ENCODE measurements at regions of chr6 and their contacts with region 1.

Region 1: GRCh38 chr6:149028767-149029405 is 282.1 kb downstream of the UST start:
- DNase-seq: no peak
- H3K4me3 ChIP-seq: no peak overlapping the region
- H3K27ac ChIP-seq: no peak overlapping the region
- H3K4me1 ChIP-seq: 0 out of 7 replicates have a peak, but pooled peaks cover 0 to 2% (median 0%) of the 10 kb centered on the region in 4 experiments
- H3K27me3 ChIP-seq: no peaks in the 10 kb centered on the region
- CTCF ChIP-seq: peak in 2 of 3 experiments; percentile 47 to 63; a peak in 2 of 4 replicates
- EP300 ChIP-seq: no peak
- POLR2A ChIP-seq: no peak
- RAD21 ChIP-seq: peak; percentile 77 to 80

Region 2: DNA sequence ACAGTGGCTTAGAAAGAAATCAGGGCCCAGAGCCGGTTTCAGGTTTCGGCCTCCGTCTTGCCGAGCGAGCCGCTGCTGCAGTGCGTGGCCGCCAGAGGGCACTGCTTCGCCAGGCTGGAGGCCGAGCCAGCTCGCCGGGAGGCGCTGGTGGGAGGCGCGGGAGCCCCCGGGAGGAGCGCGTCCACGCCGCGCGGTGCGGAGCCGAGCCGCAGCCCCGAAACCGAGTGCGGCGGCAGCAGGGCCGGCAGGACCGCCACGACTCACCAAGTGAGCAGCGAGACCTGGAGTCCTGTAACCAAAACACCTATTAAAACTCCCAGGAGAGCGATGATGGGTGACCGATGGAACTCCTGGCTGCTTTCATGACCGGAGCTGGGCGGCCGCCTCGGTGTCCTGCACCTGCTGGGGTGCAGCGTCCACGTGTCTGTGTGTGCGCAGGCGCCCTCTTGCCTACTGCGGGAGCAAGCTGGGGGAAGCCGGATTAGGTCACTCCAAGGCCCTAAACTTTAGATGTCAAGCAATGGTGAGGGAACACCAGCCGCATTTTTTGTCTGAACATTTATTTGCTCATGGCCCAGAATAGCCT is 468.9 kb before region 1 on chr6:
- CTCF ChIA-PET with region 1: interaction called, 12 read pairs
- POLR2A ChIA-PET with region 1: no interaction called
- DNase-seq: peak; percentile 21 to 94
- H3K4me3 ChIP-seq: peak overlapping the region; percentile 18 to 60 (median 43); a peak in 7 of 8 replicates
- H3K27ac ChIP-seq: no peak overlapping the region
- H3K4me1 ChIP-seq: no peaks in the 10 kb centered on the region
- H3K27me3 ChIP-seq: peaks cover 0 to 10% (median 6%) of the 10 kb centered on the region in 4 experiments; a peak in 5 of 7 replicates
- CTCF ChIP-seq: peak; percentile 90 to 97 (median 97)
- EP300 ChIP-seq: 0 out of 3 replicates have a peak, but pooled peaks of 1 of the 2 experiments have one; percentile 58
- POLR2A ChIP-seq: 0 out of 3 replicates have a peak, but pooled peaks of 1 of the 2 experiments have one; percentile 44
- RAD21 ChIP-seq: peak; percentile 95 to 97

Region 3: GRCh38 chr6:148578245-148578732 is 450.6 kb before region 1 on chr6:
- CTCF ChIA-PET with region 1: interaction called, 49 read pairs
- POLR2A ChIA-PET with region 1: no interaction called
- DNase-seq: peak; percentile 74 to 86
- H3K4me3 ChIP-seq: no peak overlapping the region
- H3K27ac ChIP-seq: no peak overlapping the region
- H3K4me1 ChIP-seq: peaks cover 0 to 6% (median 1%) of the 10 kb centered on the region in 4 experiments; a peak in 5 of 7 replicates
- H3K27me3 ChIP-seq: no peaks in the 10 kb centered on the region
- CTCF ChIP-seq: peak; percentile 92 to 100 (median 98)
- EP300 ChIP-seq: no peak
- POLR2A ChIP-seq: no peak
- RAD21 ChIP-seq: peak; percentile 100

Region 4: DNA sequence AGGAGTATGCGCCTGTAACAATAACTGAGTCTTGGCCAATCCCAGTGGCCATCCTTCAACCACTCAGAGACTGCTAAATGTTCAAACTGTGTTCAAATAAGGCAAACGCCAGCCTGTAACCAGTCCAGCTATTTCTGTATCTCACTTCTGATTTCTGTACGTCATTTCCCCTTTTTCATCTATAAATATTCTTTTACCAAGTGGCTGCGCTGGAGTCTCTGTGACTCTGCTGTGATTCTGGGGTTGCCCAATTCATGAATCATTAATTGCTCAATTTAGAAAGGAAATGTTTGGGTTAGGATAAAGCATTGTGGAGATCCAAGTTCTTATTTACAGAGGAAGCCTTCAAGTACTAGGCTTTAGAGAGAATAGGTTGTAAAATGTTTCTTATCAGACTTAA is 371.8 kb before region 1 on chr6:
- CTCF ChIA-PET with region 1: no interaction called
- POLR2A ChIA-PET with region 1: no interaction called
- DNase-seq: no peak
- H3K4me3 ChIP-seq: no peak overlapping the region
- H3K27ac ChIP-seq: no peak overlapping the region
- H3K4me1 ChIP-seq: no peaks in the 10 kb centered on the region
- H3K27me3 ChIP-seq: no peaks in the 10 kb centered on the region
- CTCF ChIP-seq: no peak
- EP300 ChIP-seq: no peak
- POLR2A ChIP-seq: no peak
- RAD21 ChIP-seq: no peak

Region 5: GRCh38 chr6:148947621-148948444 is 81.1 kb before region 1 on chr6:
- CTCF ChIA-PET with region 1: interaction called, 13 read pairs
- POLR2A ChIA-PET with region 1: no interaction called
- DNase-seq: peak; percentile 80 to 94
- H3K4me3 ChIP-seq: no peak overlapping the region
- H3K27ac ChIP-seq: no peak overlapping the region
- H3K4me1 ChIP-seq: peaks cover 0 to 12% (median 5%) of the 10 kb centered on the region in 4 experiments; a peak in 4 of 7 replicates
- H3K27me3 ChIP-seq: no peaks in the 10 kb centered on the region
- CTCF ChIP-seq: peak; percentile 74 to 91 (median 81)
- EP300 ChIP-seq: no peak
- POLR2A ChIP-seq: no peak
- RAD21 ChIP-seq: peak; percentile 79 to 86

Region 6: DNA sequence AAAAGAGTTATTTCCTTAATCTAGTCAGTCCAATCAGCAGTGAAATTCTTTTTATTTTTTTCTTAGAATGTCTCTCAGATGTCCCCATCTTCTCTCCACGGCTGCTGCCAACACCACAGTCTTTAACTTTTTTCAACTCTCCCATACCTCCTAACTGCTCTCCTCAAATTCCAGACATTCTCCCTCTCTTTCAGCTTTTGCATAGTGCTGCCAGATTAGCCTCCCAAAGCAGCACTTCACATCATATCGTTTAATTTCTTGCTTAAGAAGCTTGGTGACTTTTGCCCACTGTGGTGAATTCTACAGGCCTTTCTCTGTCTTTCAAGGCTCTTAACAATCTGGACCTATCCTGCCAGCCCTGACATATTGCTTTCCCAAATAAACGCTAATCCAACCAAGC is 48.7 kb before region 1 on chr6:
- CTCF ChIA-PET with region 1: interaction called, 10 read pairs
- POLR2A ChIA-PET with region 1: no interaction called
- DNase-seq: no peak
- H3K4me3 ChIP-seq: no peak overlapping the region
- H3K27ac ChIP-seq: no peak overlapping the region
- H3K4me1 ChIP-seq: peaks cover 2 to 5% (median 2%) of the 10 kb centered on the region in 4 experiments; a peak in 3 of 7 replicates
- H3K27me3 ChIP-seq: no peaks in the 10 kb centered on the region
- CTCF ChIP-seq: no peak
- EP300 ChIP-seq: no peak
- POLR2A ChIP-seq: no peak
- RAD21 ChIP-seq: no peak

Region 7: DNA sequence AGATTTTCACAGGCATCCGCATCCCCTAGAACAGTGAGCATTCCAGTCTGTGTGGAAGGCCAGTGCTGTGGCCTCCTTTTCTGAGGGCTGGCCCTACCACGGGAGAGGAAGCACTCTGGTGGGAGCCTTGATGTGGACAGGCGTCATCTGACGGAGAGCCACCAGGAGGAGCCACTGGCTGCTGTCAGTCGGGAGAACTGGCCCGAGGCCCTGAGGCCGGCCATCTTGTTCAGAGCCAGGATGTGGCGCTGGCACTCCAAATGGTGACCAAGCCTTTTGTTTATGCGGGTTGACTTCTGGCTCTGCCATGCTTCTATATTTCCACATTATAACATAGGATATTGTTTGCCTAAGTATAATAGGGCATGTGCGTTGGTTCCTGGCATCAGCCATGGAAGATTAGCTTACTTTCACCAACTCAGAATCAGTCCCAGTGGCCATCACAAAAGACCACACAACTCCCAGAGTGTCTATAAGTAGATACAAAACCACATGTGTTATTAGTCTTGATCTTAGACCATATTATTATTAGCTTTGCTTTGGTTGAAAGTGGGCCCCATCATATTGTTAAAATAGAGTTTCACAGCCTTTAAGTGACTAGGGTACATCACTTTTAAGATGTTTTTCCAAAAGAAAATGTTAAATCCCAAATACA is 14.7 kb after region 1 on chr6:
- CTCF ChIA-PET with region 1: interaction called, 44 read pairs
- POLR2A ChIA-PET with region 1: interaction called, 4 read pairs
- DNase-seq: peak; percentile 27 to 78
- H3K4me3 ChIP-seq: no peak overlapping the region
- H3K27ac ChIP-seq: no peak overlapping the region
- H3K4me1 ChIP-seq: peaks cover 0 to 12% (median 7%) of the 10 kb centered on the region in 4 experiments; a peak in 6 of 7 replicates
- H3K27me3 ChIP-seq: no peaks in the 10 kb centered on the region
- CTCF ChIP-seq: peak; percentile 65 to 76 (median 69)
- EP300 ChIP-seq: no peak
- POLR2A ChIP-seq: no peak
- RAD21 ChIP-seq: peak; percentile 63 to 75

Region 8: DNA sequence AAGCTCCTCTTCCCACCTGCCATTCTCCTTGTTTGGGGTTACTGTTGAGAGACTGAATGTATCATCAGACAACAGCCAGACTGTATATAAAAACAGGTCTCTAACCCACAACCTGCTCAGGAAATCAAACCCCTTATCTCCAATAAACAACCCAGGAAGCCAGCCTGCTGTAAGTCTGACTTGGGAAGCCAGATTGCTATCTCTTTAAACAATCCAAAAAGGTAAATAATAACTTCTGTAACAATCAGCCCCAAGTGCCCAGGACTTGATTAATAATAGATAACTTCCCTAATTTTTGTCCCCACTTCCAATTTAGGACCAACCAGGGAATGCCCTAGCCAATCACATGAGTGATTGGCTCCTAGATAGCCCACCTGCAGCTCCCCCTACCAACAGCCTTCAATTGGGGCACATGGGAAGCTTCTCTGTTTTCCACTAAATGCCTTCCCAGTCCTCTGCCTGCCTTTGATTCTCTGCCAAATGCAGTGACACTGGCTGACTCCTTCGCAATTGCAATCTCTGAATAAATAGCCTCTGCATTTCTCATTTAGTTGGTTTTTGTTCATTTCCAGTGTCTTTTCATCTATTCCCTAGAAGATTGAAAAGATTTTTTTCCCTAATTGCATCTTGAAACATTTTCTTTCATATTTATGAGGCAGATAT is 171.5 kb after region 1 on chr6:
- CTCF ChIA-PET with region 1: no interaction called
- POLR2A ChIA-PET with region 1: no interaction called
- DNase-seq: no peak
- H3K4me3 ChIP-seq: no peak overlapping the region
- H3K27ac ChIP-seq: no peak overlapping the region
- H3K4me1 ChIP-seq: peaks cover 0 to 2% (median 0%) of the 10 kb centered on the region in 4 experiments; a peak in 2 of 7 replicates
- H3K27me3 ChIP-seq: no peaks in the 10 kb centered on the region
- CTCF ChIP-seq: no peak
- EP300 ChIP-seq: no peak
- POLR2A ChIP-seq: no peak
- RAD21 ChIP-seq: no peak

Region 9: DNA sequence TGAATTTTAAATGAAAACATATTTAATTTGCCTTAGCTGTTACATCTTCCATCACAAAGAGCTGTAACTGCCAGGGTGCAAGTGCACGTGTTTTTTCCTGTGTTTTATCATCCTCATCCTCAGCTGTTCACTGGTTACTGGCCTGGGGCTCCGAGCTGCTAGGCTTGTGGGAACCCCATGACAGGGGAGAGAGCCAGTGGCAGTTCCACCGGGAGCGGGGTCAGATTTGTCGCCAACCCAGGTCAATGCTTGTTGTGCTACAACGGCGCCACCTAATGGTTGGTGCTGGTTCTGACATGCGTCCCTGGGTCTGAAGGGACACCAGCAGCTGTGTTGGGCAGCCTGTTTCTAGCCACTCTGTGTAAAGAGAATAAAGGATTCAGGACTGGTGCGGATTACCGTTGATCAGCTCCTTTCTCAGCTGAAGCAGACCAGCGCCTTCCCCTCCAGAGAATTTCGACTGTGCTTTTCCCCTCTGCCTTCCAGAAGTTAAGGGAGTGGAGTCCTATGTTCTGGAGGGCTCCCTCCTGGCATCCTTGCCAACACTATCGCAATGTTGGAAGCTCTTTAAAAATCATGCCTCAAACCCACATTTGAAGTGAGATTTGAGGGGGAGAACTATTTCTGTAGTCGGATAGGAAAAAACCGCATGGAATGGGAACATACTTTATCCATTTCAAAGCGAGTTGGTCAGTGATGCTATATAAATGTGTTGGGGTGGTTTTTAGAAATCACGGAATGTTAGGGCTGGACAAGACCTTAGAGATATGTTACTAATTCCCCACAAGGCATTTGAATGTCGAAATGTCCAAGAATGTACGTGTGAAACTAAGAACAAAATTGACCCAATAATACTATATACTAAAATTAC is 403.3 kb after region 1 on chr6:
- CTCF ChIA-PET with region 1: interaction called, 16 read pairs
- POLR2A ChIA-PET with region 1: no interaction called
- DNase-seq: peak; percentile 92 to 99
- H3K4me3 ChIP-seq: no peak overlapping the region
- H3K27ac ChIP-seq: no peak overlapping the region
- H3K4me1 ChIP-seq: 0 out of 7 replicates have a peak, but pooled peaks cover 0 to 2% (median 0%) of the 10 kb centered on the region in 4 experiments
- H3K27me3 ChIP-seq: no peaks in the 10 kb centered on the region
- CTCF ChIP-seq: peak; percentile 94 to 98 (median 95)
- EP300 ChIP-seq: no peak
- POLR2A ChIP-seq: no peak
- RAD21 ChIP-seq: peak; percentile 99 to 100

Measured in H1 (cell line).